ENCODE measurements at regions of chr2 and their contacts with region 1.

Region 1: DNA sequence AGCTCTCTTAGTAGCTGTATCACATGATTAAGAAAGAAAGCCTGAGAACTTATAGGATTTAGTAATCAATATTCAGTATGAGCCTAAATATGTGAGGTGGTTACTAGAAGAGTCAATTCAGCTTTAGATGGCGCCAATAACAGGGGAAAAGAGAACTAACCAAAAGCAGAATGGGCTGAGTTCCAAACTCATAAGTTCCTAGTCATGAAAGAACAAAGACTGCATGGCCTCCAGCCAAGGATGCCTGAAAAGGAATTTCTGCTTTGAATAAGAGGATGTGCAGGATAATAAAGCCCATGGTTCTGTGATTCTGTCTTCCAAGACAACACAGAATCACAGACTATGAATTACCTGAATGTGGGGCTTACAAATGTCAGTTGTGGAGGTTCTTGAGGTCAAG is 196.5 kb downstream of the SATB2 start:
- DNase-seq: peak; percentile 82
- ATAC-seq: peak; percentile 63
- H3K4me3 ChIP-seq: no peak overlapping the region
- H3K27ac ChIP-seq: no peak overlapping the region
- H3K4me1 ChIP-seq: no peaks in the 10 kb centered on the region
- H3K27me3 ChIP-seq: no peaks in the 10 kb centered on the region
- CTCF ChIP-seq: peak; percentile 38; the same call in 1 of the 2 replicates

Region 2: DNA sequence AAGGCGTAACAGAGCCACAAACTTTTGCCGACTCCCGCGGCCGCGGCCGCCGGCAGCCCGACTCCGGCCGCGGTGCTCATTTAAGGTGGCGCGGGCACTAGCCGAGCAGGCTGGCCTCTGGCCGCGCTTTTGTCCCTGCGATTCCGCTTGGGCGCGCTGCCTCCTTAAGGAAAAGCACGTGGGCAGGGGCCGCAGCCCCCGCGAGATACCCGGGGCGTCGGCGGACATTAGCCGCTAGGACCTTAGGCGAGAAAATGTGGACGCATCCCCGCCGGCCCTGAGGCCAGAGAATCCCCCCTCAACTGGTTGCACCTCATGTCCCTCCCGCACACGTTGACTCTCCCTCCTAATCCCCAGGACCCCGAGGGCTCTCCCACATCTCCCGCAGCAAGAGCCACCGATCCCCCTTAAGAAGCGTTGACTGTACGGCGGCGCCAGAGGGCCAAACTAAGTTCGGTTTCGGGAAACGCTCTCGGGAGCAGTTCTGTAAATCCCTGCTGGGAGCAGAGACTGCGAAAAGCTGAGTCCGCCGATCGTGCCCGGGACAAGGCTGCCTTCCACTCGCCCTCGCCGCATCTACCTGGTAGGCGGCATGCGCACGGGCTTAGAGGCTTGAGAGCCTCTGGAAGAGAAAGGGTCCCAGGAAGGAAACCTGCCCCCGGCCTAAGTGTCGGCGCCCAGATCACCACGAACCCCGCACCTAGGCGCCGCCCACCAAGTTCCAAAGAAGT is 198.2 kb after region 1 on chr2:
- CTCF ChIA-PET with region 1: no interaction called
- POLR2A ChIA-PET with region 1: no interaction called
- intact Hi-C with region 1: loop called (anchors 2 kb)
- DNase-seq: peak; percentile 88
- ATAC-seq: peak; percentile 43
- H3K4me3 ChIP-seq: peak overlapping the region; percentile 79
- H3K27ac ChIP-seq: peak overlapping the region; percentile 75
- H3K4me1 ChIP-seq: peaks cover 14% of the 10 kb centered on the region
- H3K27me3 ChIP-seq: no peaks in the 10 kb centered on the region
- CTCF ChIP-seq: no peak